Activated CD4-positive, alpha-beta T cell treated with anti-CD3 and anti-CD28 coated beads, Interleukin-2, amount 10 ng/mL, durations not matched to agents 24 days and 14 days (primary cell): ENCODE measurements at regions of chr19 and their contacts with region 1.

Region 1: DNA sequence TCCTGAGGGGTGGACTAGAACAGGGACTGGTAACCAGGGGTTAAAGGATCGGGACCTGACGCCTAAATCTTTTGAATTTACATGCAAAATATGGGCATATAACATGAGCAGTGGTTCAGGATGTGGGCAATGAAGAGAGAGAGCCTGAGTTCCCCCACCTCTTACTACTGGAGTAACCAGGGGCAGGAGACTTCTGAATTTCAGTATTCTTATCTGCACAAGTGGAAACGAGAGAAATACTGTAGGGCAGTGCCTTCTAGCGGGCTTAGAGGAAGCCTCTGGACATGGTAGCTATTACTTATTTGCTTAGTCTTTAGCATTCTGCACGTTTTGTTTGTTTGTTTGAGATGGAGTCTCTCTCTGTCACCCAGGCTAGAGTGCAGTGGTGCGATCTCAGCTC is 26.3 kb downstream of the BCAT2 start:
- DNase-seq: no peak
- H3K4me3 Mint-ChIP-seq: no peak overlapping the region
- H3K27ac Mint-ChIP-seq: no peak overlapping the region
- H3K4me1 Mint-ChIP-seq: peaks cover 2% of the 10 kb centered on the region
- H3K27me3 Mint-ChIP-seq: peaks cover 12% of the 10 kb centered on the region

Region 2: GRCh38 chr19:48842789-48843162 is 58.2 kb after region 1 on chr19:
- intact Hi-C with region 1: loop called (anchors 1 kb)
- DNase-seq: peak; percentile 88
- H3K4me3 Mint-ChIP-seq: no peak overlapping the region
- H3K27ac Mint-ChIP-seq: no peak overlapping the region
- H3K4me1 Mint-ChIP-seq: peaks cover under 1% of the 10 kb centered on the region
- H3K27me3 Mint-ChIP-seq: peaks cover 3% of the 10 kb centered on the region

Region 3: DNA sequence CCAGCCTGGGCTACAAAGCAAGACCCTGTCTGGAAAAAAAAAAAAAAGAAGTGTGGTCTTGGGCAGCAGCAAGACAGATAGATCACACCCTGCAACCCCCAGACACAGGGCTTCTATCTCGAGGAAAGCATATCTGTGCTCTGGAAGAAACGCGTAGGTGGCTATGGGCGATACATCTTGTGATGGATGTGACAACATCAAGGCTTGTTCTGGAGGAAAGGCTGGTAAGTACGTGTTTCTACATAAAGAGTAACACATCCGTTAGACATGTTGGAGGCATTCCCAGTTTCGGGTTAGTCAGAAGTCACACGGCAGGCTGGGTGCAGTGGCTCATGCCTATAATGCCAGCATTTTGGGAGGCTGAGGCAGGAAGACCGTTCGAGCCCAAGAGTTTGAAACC is 142.4 kb after region 1 on chr19:
- intact Hi-C with region 1: no loop called
- DNase-seq: peak; percentile 66
- H3K4me3 Mint-ChIP-seq: peak overlapping the region; percentile 35
- H3K27ac Mint-ChIP-seq: peak overlapping the region; percentile 45
- H3K4me1 Mint-ChIP-seq: peaks cover 5% of the 10 kb centered on the region
- H3K27me3 Mint-ChIP-seq: no peaks in the 10 kb centered on the region